ENCODE measurements at regions of chr3 and their contacts with region 1.

Region 1: GRCh38 chr3:138834359-138835212 is at the start of gene PIK3CB:
- DNase-seq: peak; percentile 86
- H3K4me3 ChIP-seq: peak within 1 kb of the TSS; percentile 77 to 83 (median 81)
- H3K27ac ChIP-seq: peak within 1 kb of the TSS; percentile 75
- H3K4me1 ChIP-seq: peaks cover 9% of the 10 kb centered on the region
- H3K27me3 ChIP-seq: no peaks in the 10 kb centered on the region
- CTCF ChIP-seq: peak; percentile 11 to 46
- total RNA-seq, gene PIK3CB: 14.5 to 27.2 TPM

Region 2: DNA sequence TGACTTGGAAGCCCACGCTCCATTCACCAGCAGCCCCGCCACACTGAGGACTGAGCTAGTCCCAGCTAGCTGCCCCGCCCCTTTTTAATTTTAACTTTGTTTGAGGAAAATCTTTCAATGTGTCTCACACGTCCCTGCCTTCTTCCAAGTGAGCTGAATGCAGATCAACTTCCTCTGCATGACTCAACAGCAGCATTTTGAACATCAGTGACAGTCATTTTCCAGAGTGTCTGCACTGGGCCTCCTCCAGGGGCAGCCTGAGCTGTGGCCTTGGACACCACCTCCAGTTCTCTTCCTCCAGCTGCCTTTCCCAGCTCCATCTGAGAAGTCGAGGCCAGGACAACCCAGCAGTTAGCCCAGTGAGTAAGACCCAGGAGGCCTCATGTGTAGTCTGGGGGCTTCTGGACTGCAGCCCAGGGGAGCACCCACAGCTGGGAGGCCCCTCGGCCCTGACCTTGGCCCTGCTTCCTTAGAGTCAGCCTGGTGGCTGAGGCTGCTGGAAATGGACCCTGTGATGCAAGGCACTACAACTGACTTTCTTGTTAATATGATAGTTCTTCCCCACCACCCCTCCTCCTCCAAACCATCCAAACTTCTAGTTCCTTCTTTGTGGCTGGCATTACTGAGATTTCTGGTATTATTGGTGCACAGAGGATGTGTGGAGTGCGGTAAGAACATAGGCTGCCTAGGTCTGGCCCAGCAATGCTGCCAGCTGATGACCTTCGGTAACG is 421.6 kb before region 1 on chr3:
- CTCF ChIA-PET with region 1: no interaction called
- dilution Hi-C with region 1: no loop called
- in situ Hi-C with region 1: no loop called
- intact Hi-C with region 1: no loop called
- DNase-seq: no peak
- H3K4me3 ChIP-seq: no peak overlapping the region
- H3K27ac ChIP-seq: no peak overlapping the region
- H3K4me1 ChIP-seq: no peaks in the 10 kb centered on the region
- H3K27me3 ChIP-seq: no peaks in the 10 kb centered on the region
- CTCF ChIP-seq: no peak

Region 3: DNA sequence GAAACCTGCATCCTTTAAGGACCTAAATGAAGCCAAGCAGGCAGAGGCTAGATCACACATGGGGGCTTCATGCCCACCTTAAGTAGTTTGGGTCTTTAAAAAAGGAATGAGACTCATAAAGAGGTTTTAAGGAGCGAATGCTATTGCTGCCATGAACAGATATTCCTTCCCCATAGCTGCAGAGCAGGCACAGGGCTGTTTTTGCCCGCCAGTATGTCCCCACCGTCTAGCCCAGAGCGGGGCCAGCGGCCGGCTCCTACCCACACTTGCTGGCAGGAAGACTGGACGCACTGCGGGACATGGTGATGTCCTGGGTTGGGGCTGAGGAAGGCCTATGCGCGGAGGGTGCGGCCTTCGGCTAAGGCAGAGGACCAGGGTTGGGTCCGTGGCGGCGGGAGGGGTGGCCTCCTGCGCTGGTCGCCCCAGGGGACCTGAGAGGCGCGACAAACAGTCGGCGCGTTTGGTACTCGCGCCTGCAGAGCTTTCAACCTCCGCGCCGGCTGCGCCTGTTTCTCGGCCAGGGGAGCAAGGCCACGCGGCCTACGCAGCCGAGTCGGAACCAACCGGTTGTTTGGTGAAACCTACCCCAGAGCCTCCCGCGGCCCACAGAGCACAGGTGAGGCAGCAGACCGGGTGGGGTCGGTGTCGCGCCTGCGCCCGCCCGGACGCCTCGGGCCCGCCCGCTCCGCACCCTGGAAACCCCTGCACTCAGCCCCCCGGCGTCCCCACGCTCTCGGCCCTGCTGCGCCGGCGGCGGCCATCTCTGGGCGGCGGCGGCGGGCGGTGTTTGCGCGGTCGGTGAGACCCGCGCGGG is 226.1 kb before region 1 on chr3 and contains the start of gene FAIM:
- CTCF ChIA-PET with region 1: no interaction called
- dilution Hi-C with region 1: no loop called
- in situ Hi-C with region 1: no loop called
- intact Hi-C with region 1: loop called (anchors 5 kb)
- DNase-seq: peak; percentile 68
- H3K4me3 ChIP-seq: peak within 1 kb of the TSS; percentile 59 to 66 (median 61)
- H3K27ac ChIP-seq: peak within 1 kb of the TSS; percentile 76
- H3K4me1 ChIP-seq: peaks cover 12% of the 10 kb centered on the region
- H3K27me3 ChIP-seq: no peaks in the 10 kb centered on the region
- CTCF ChIP-seq: no peak
- total RNA-seq, gene FAIM: 9.7 to 18.2 TPM

Region 4: DNA sequence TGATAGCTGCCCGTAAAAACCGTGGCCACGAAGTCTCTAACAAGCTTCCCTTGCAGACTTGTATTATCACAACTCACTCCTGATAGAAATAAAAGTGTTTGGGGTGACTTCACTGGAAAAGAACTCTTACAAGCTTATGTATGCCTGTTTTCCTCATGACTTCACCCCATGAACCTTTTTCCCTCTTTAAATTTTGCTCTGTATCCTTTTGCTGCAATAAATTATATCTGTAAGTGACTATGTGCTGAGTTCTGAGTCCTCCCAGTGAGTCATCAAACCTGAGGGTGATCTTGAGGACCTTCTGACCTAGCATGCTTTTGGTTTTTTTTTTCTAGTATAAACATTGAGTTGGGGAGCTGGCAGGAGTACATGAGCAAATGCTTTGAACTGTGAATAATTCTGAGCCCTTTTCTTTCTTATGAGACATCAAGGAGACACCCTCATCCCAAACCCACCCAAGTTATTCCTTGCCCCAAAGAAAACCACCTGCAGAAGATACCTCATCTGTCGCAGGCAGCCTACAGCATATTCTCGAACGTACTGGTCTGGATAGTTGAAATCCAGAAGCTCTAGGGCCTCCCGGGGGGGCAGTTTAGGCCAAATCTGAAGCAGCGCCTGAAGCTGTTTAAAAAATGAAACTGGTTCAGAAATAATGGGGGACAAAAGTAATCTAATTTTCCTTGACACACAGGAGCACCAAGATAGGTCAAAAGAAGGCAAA is 140.1 kb before region 1 on chr3:
- CTCF ChIA-PET with region 1: no interaction called
- dilution Hi-C with region 1: no loop called
- in situ Hi-C with region 1: no loop called
- intact Hi-C with region 1: loop called (anchors 5 kb)
- DNase-seq: peak; percentile 88
- H3K4me3 ChIP-seq: no peak overlapping the region
- H3K27ac ChIP-seq: no peak overlapping the region
- H3K4me1 ChIP-seq: peaks cover 10% of the 10 kb centered on the region
- H3K27me3 ChIP-seq: no peaks in the 10 kb centered on the region
- CTCF ChIP-seq: no peak

Region 5: DNA sequence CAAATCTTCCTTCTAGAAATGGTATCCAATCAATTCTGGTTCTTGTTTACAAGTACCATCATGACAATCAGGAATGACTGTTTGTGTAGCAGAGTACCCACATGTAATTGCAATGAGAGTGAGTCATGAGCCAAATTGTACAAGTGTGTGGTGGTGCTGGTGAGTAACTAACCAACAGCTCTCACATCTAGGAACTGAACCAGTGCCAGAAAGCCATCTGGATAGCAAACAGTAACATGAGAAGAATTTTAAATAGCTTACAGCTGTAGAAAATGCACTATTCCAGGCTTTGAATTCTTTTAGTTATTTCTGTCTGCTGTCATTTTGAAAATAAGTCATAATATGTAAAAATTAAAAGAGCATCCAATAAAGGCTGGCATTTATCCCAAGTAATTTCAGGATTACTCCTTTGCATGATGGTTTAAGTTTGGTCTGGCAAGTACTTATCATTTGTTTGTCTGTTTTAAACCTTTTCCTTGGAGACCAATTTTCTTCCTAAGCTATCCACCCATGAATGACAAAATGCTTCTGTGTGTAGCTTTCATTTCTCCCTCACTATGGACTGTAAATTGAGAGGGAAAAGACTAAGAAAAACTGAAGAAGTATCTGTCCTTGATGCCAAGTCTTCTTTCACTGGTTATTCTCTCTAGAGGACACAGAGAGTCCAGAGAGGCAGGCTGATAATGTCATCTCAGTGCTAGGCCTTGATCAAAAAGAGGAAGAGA is 59.9 kb before region 1 on chr3:
- CTCF ChIA-PET with region 1: no interaction called
- dilution Hi-C with region 1: loop called (anchors 5 kb)
- in situ Hi-C with region 1: no loop called
- intact Hi-C with region 1: loop called (anchors 2 kb)
- DNase-seq: peak; percentile 98
- H3K4me3 ChIP-seq: no peak overlapping the region
- H3K27ac ChIP-seq: peak overlapping the region; percentile 84
- H3K4me1 ChIP-seq: peaks cover 25% of the 10 kb centered on the region
- H3K27me3 ChIP-seq: no peaks in the 10 kb centered on the region
- CTCF ChIP-seq: no peak

Region 6: GRCh38 chr3:138797508-138798038 is 37.0 kb before region 1 on chr3:
- CTCF ChIA-PET with region 1: no interaction called
- dilution Hi-C with region 1: no loop called
- in situ Hi-C with region 1: no loop called
- intact Hi-C with region 1: no loop called
- DNase-seq: no peak
- H3K4me3 ChIP-seq: no peak overlapping the region
- H3K27ac ChIP-seq: no peak overlapping the region
- H3K4me1 ChIP-seq: no peaks in the 10 kb centered on the region
- H3K27me3 ChIP-seq: no peaks in the 10 kb centered on the region
- CTCF ChIP-seq: no peak

Region 7: GRCh38 chr3:138862924-138863775 is 28.6 kb after region 1 on chr3:
- CTCF ChIA-PET with region 1: no interaction called
- dilution Hi-C with region 1: no loop called
- in situ Hi-C with region 1: no loop called
- intact Hi-C with region 1: loop called (anchors 1 kb)
- DNase-seq: peak; percentile 96
- H3K4me3 ChIP-seq: peak overlapping the region in 2 of 3 experiments; percentile 7 to 20
- H3K27ac ChIP-seq: peak overlapping the region; percentile 100
- H3K4me1 ChIP-seq: peaks cover 24% of the 10 kb centered on the region
- H3K27me3 ChIP-seq: no peaks in the 10 kb centered on the region
- CTCF ChIP-seq: no peak